Activated naive CD4-positive, alpha-beta T cell treated with anti-CD3 and anti-CD28 coated beads for 36 hours (primary cell): ENCODE measurements at regions of chr4 and their contacts with region 1.

Region 1: GRCh38 chr4:39458505-39459300 is at the starts of genes LIAS and RPL9:
- DNase-seq: peak; percentile 95
- H3K4me3 Mint-ChIP-seq: peak within 1 kb of the TSS; percentile 91
- H3K27ac Mint-ChIP-seq: peak within 1 kb of the TSS; percentile 98
- H3K4me1 Mint-ChIP-seq: peaks cover 48% of the 10 kb centered on the region
- H3K27me3 Mint-ChIP-seq: no peaks in the 10 kb centered on the region
- total RNA-seq, gene LIAS: 30.9 to 31.7 TPM
- total RNA-seq, gene RPL9: 2,383 to 2,428 TPM

Region 2: GRCh38 chr4:38832624-38833528 is 625.8 kb before region 1 on chr4:
- CTCF ChIA-PET with region 1: no interaction called
- intact Hi-C with region 1: no loop called
- DNase-seq: no peak
- H3K4me3 Mint-ChIP-seq: no peak overlapping the region
- H3K27ac Mint-ChIP-seq: no peak overlapping the region
- H3K4me1 Mint-ChIP-seq: peaks cover 12% of the 10 kb centered on the region
- H3K27me3 Mint-ChIP-seq: no peaks in the 10 kb centered on the region

Region 3: DNA sequence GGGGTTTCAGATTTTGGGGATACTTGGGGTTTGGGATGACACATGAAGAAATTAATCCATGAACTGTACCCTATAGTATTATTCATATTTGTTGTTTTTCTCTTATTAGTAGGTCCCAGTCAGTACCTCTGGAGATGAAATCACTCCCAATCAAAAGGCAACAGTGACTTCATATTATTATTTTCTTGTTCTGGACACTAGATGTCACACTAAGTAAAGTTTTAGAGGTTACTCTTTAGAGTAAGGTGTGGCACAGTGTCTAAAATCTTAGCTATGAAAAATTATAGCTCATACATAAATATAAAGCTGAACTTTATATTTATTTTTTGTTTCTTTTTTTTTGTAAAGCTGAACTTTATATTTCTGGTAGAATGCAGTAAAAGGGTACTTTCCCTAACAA is 556.0 kb before region 1 on chr4:
- CTCF ChIA-PET with region 1: interaction called, 4 read pairs
- intact Hi-C with region 1: loop called (anchors 5 kb)
- DNase-seq: no peak
- H3K4me3 Mint-ChIP-seq: no peak overlapping the region
- H3K27ac Mint-ChIP-seq: no peak overlapping the region
- H3K4me1 Mint-ChIP-seq: peaks cover 5% of the 10 kb centered on the region
- H3K27me3 Mint-ChIP-seq: peaks cover 3% of the 10 kb centered on the region

Region 4: GRCh38 chr4:38930204-38930603 is 528.5 kb before region 1 on chr4:
- CTCF ChIA-PET with region 1: no interaction called
- intact Hi-C with region 1: no loop called
- DNase-seq: no peak
- H3K4me3 Mint-ChIP-seq: no peak overlapping the region
- H3K27ac Mint-ChIP-seq: no peak overlapping the region
- H3K4me1 Mint-ChIP-seq: no peaks in the 10 kb centered on the region
- H3K27me3 Mint-ChIP-seq: no peaks in the 10 kb centered on the region

Region 5: GRCh38 chr4:39446751-39447573 is 11.7 kb before region 1 on chr4:
- CTCF ChIA-PET with region 1: interaction called, 11 read pairs
- intact Hi-C with region 1: loop called (anchors 1 kb)
- DNase-seq: peak; percentile 74
- H3K4me3 Mint-ChIP-seq: peak overlapping the region; percentile 32
- H3K27ac Mint-ChIP-seq: no peak overlapping the region
- H3K4me1 Mint-ChIP-seq: peaks cover 22% of the 10 kb centered on the region
- H3K27me3 Mint-ChIP-seq: no peaks in the 10 kb centered on the region

Region 6: GRCh38 chr4:39527273-39528060 is 68.8 kb after region 1 on chr4 and contains the start of gene UGDH:
- CTCF ChIA-PET with region 1: interaction called, 3 read pairs
- intact Hi-C with region 1: loop called (anchors 1 kb)
- DNase-seq: peak; percentile 91
- H3K4me3 Mint-ChIP-seq: peak within 1 kb of the TSS; percentile 97
- H3K27ac Mint-ChIP-seq: peak within 1 kb of the TSS; percentile 81
- H3K4me1 Mint-ChIP-seq: peaks cover 18% of the 10 kb centered on the region
- H3K27me3 Mint-ChIP-seq: no peaks in the 10 kb centered on the region
- total RNA-seq, gene UGDH: 11.7 to 14.6 TPM

Region 7: DNA sequence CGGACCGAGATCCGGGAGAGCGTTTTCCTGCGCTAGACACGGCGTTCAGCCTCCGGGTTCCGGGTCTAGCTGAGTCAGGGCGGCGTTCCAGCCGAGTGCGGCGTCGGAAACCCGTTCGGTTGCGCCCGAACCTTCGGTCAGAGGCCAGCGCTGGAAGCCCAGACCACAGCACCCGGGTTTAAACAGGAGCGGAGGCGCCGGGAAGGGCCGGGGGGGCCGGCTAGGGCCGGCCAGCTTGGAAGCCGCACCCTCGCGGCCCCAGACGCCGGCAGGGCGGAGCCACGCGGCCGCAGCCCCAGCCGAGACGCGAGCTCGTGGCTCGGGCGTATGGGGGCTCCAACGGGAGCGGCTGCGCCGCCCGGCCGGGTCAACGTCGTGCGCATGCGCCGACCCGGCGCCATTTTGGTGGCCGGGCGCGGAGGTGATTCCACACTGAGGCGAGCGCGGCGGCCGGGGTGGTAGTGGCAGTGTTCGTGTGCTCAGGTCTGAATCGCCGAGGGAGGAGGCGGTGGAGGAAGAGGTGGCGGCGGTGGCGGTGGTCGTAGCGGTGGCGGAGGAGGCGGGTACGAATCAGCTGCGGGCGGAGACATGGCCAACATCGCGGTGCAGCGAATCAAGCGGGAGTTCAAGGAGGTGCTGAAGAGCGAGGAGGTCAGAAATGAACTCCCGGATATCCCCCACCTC is 239.2 kb after region 1 on chr4 and contains the start of gene UBE2K:
- CTCF ChIA-PET with region 1: no interaction called
- intact Hi-C with region 1: loop called (anchors 1 kb)
- DNase-seq: peak; percentile 85
- H3K4me3 Mint-ChIP-seq: peak within 1 kb of the TSS; percentile 98
- H3K27ac Mint-ChIP-seq: peak within 1 kb of the TSS; percentile 98
- H3K4me1 Mint-ChIP-seq: peaks cover 32% of the 10 kb centered on the region
- H3K27me3 Mint-ChIP-seq: no peaks in the 10 kb centered on the region
- total RNA-seq, gene UBE2K: 60.6 to 69.5 TPM

Region 8: DNA sequence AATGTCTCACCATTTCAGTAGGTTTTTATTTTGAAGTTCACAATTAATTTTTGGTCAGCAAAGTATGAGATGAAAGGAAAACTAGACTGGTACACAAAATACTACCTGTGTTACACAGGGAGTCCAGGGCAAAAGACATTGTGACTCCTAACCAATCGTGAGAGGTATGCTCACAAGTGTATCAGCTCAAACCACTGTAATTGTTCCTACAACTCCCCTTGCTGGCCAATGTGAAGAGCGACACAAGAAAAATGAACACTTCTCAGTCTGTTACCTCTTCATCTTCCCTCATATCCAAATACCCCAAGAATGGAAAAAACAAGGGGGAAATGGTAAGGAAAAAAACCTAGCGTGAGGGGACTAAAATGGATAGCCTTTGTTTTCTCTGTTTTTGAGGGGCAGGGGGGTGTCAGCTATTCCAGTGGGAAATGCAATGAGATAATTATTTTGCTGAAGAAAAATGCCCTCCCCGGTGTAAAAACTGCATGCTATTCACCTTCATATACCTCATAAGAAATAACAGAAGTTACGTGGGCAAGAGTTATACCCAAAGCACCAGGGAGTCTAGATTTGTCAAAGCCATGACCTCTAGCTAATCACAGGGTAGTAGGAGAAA is 1260.4 kb after region 1 on chr4:
- CTCF ChIA-PET with region 1: no interaction called
- intact Hi-C with region 1: no loop called
- DNase-seq: peak; percentile 27
- H3K4me3 Mint-ChIP-seq: no peak overlapping the region
- H3K27ac Mint-ChIP-seq: no peak overlapping the region
- H3K4me1 Mint-ChIP-seq: peaks cover 8% of the 10 kb centered on the region
- H3K27me3 Mint-ChIP-seq: no peaks in the 10 kb centered on the region